Activated naive CD4-positive, alpha-beta T cell treated with anti-CD3 and anti-CD28 coated beads for 36 hours (primary cell): ENCODE measurements at regions of chr1 and their contacts with region 1.

Region 1: DNA sequence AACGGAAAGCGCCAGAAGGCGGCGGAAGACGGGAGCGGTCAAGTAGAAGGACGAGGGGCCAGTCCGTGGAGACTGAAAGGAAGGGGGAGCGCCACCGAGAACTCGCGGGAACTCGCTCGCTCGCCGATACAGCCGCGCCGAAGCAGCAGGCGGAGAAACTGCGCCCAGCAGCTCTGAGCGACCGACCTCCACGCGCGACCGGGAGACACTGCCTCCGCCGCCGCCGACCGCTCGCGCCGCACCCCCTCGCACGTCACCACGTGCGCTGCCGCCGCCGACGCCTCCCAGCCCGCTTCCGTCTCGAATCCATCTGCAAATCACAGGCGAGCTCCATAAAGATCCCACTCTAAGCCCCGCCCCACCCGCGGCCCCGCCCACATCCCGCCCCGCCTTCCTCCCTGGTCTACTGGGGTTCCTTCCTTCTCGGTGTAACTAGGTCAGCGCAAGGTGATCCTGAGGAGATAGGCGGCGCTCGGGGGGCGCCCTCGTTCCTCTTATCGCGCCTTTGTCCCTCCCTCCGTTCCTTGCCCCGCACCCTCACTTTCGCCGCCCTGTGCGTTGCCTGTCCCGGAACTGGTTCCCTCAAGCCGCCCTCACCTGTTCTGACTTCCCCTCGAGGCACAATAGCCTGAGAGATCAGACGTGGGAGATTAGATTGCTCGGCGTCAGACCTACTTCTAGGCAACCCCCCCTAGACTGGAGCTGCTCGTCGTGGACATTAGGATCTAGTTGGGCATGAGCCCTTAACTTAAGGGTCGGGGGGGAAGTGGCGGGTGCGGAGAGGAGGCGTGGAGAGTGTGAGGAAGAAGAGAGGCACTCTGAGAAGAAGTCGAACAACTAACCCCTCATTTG is at the start of gene IVNS1ABP:
- DNase-seq: peak; percentile 95
- H3K4me3 Mint-ChIP-seq: peak within 1 kb of the TSS; percentile 92
- H3K27ac Mint-ChIP-seq: peak within 1 kb of the TSS; percentile 94
- H3K4me1 Mint-ChIP-seq: peaks cover 40% of the 10 kb centered on the region
- H3K27me3 Mint-ChIP-seq: no peaks in the 10 kb centered on the region
- total RNA-seq, gene IVNS1ABP: 97.3 to 100 TPM

Region 2: GRCh38 chr1:184866991-184867788 is 450.1 kb before region 1 on chr1:
- CTCF ChIA-PET with region 1: no interaction called
- intact Hi-C with region 1: loop called (anchors 10 kb)
- DNase-seq: peak; percentile 80
- H3K4me3 Mint-ChIP-seq: peak overlapping the region; percentile 14
- H3K27ac Mint-ChIP-seq: peak overlapping the region; percentile 94
- H3K4me1 Mint-ChIP-seq: peaks cover 32% of the 10 kb centered on the region
- H3K27me3 Mint-ChIP-seq: peaks cover 10% of the 10 kb centered on the region

Region 3: DNA sequence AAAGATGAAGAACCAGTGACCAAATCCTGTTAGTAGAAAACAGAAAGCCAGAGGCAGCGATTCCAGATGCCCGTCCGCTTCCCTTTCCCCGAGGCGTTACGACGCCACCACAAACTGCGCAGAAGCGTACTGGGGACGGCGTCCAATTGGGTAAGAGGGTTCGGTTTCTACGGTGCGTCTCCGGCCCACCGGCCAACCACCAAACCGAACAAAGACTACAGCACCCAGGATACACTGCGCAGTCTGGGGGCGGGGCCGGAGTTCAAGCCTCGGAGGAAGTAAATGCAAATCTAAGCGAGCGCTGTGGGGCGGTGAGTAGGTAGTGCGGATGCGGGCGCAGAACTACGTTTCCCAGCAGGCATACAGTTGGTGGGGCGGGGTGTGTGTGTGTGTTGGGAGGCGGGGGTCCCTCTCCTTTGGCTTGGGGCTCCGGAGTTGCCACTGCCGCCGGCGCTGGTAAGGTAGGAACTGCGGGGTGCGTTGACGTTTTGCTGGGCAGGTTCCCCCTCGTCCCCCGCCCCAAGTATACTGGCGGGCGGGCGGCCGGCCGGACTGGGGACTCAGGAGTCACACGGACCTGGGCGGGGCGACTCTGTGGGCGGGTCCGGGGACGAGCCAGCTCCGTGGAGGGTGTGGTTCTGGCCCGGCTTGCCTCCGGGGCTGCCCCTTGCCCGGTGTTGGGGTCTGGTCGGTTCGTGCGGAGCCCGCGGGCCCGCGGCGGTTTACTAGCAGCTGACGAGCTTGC is 160.2 kb before region 1 on chr1 and contains the starts of genes SWT1 and TRMT1L:
- CTCF ChIA-PET with region 1: no interaction called
- intact Hi-C with region 1: loop called (anchors 1 kb)
- DNase-seq: peak; percentile 98
- H3K4me3 Mint-ChIP-seq: peak within 1 kb of the TSS; percentile 92
- H3K27ac Mint-ChIP-seq: peak within 1 kb of the TSS; percentile 91
- H3K4me1 Mint-ChIP-seq: peaks cover 44% of the 10 kb centered on the region
- H3K27me3 Mint-ChIP-seq: no peaks in the 10 kb centered on the region
- total RNA-seq, gene SWT1: 1.7 to 2.9 TPM
- total RNA-seq, gene TRMT1L: 26.6 to 28.7 TPM

Region 4: GRCh38 chr1:185439727-185440415 is 122.6 kb after region 1 on chr1:
- CTCF ChIA-PET with region 1: no interaction called
- intact Hi-C with region 1: loop called (anchors 1 kb)
- DNase-seq: peak; percentile 31
- H3K4me3 Mint-ChIP-seq: no peak overlapping the region
- H3K27ac Mint-ChIP-seq: no peak overlapping the region
- H3K4me1 Mint-ChIP-seq: peaks cover 2% of the 10 kb centered on the region
- H3K27me3 Mint-ChIP-seq: no peaks in the 10 kb centered on the region

Region 5: GRCh38 chr1:185636848-185637247 is 319.6 kb after region 1 on chr1:
- CTCF ChIA-PET with region 1: no interaction called
- intact Hi-C with region 1: loop called (anchors 1 kb)
- DNase-seq: peak; percentile 55
- H3K4me3 Mint-ChIP-seq: no peak overlapping the region
- H3K27ac Mint-ChIP-seq: peak overlapping the region; percentile 40
- H3K4me1 Mint-ChIP-seq: peaks cover 12% of the 10 kb centered on the region
- H3K27me3 Mint-ChIP-seq: peaks cover 6% of the 10 kb centered on the region

Region 6: GRCh38 chr1:185987611-185988321 is 670.5 kb after region 1 on chr1:
- CTCF ChIA-PET with region 1: no interaction called
- intact Hi-C with region 1: loop called (anchors 5 kb)
- DNase-seq: peak; percentile 44
- H3K4me3 Mint-ChIP-seq: peak overlapping the region; percentile 69
- H3K27ac Mint-ChIP-seq: peak overlapping the region; percentile 98
- H3K4me1 Mint-ChIP-seq: peaks cover 15% of the 10 kb centered on the region
- H3K27me3 Mint-ChIP-seq: no peaks in the 10 kb centered on the region